HepG2 (cell line): ENCODE measurements at regions of chr2 and their contacts with region 1.

Region 1: GRCh38 chr2:120693121-120693520 is 42.5 kb upstream of the GLI2 start:
- DNase-seq: no peak
- ATAC-seq: no peak
- H3K4me3 ChIP-seq: no peak overlapping the region
- H3K27ac ChIP-seq: no peak overlapping the region
- H3K4me1 ChIP-seq: no peaks in the 10 kb centered on the region
- H3K27me3 ChIP-seq: peaks cover 5 to 65% of the 10 kb centered on the region in 2 experiments; a peak in 4 of 5 replicates
- CTCF ChIP-seq: no peak
- EP300 ChIP-seq: no peak
- POLR2A ChIP-seq: no peak
- RAD21 ChIP-seq: no peak

Region 2: GRCh38 chr2:120712180-120712681 is 19.1 kb after region 1 on chr2:
- CTCF ChIA-PET with region 1: no interaction called
- POLR2A ChIA-PET with region 1: no interaction called
- in situ Hi-C with region 1: no loop called
- intact Hi-C with region 1: no loop called
- DNase-seq: no peak
- ATAC-seq: no peak
- H3K4me3 ChIP-seq: no peak overlapping the region
- H3K27ac ChIP-seq: no peak overlapping the region
- H3K4me1 ChIP-seq: no peaks in the 10 kb centered on the region
- H3K27me3 ChIP-seq: peaks cover 7 to 91% of the 10 kb centered on the region in 2 experiments; a peak in 4 of 5 replicates
- CTCF ChIP-seq: no peak
- EP300 ChIP-seq: no peak
- POLR2A ChIP-seq: no peak
- RAD21 ChIP-seq: no peak

Region 3: GRCh38 chr2:120883617-120884440 is 190.7 kb after region 1 on chr2:
- CTCF ChIA-PET with region 1: no interaction called
- POLR2A ChIA-PET with region 1: no interaction called
- in situ Hi-C with region 1: no loop called
- intact Hi-C with region 1: loop called (anchors 1 kb)
- DNase-seq: no peak
- ATAC-seq: peak; percentile 38; the same call in 2 of the 3 replicates
- H3K4me3 ChIP-seq: no peak overlapping the region
- H3K27ac ChIP-seq: no peak overlapping the region
- H3K4me1 ChIP-seq: peaks cover 14% of the 10 kb centered on the region
- H3K27me3 ChIP-seq: peaks cover 22 to 95% of the 10 kb centered on the region in 2 experiments
- CTCF ChIP-seq: 0 out of 2 replicates have a peak, but pooled peaks have one; percentile 18
- EP300 ChIP-seq: no peak
- POLR2A ChIP-seq: no peak
- RAD21 ChIP-seq: no peak

Region 4: DNA sequence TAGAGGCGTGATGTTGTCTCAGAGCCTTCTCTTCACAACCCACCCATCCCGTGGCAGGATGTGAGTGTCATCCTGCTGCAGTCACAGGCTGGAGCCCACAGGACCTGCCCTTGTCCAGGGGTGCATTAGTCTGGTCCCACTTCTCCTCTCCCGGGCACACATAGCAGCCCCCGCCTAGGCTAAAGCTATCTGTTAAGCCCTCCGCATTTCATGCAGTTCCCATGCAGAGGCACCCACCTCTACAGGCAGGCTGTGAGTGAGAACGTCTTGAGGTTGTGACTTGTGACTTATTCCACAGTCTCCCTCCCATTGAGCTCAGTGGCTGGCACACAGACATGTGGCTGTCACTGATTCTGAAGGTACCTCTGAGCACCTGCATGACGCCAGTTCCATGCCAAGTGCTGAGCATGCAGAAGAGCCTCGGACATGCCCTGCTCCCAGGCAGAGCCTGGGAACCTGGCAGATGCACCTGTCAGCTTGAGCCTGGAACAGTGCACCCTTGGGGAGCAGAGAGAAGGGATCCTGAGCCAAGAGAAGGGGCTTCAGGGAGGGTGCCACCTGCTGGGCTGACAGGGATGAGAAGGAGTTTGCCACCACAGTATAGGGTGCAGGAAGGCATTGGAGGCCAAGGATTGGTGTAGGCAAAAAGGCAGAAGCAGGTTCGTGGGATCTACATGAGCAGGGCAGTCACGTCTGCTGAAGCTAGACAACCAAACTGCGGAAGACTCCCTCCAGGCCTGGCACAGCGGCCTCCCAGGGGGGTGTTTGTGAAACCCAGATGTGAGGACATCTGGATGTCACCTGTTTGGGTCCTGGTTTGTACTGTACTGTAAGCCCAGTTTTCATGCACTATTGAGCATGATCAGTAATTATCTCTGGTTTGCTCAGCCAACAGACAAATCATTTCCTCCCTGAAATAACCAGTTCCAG is 256.2 kb after region 1 on chr2:
- CTCF ChIA-PET with region 1: interaction called, 22 read pairs
- POLR2A ChIA-PET with region 1: no interaction called
- in situ Hi-C with region 1: loop called (anchors 5 kb)
- intact Hi-C with region 1: loop called (anchors 1 kb)
- DNase-seq: peak; percentile 40
- ATAC-seq: peak; percentile 83
- H3K4me3 ChIP-seq: no peak overlapping the region
- H3K27ac ChIP-seq: no peak overlapping the region
- H3K4me1 ChIP-seq: no peaks in the 10 kb centered on the region
- H3K27me3 ChIP-seq: peaks cover 8 to 61% of the 10 kb centered on the region in 2 experiments; a peak in 3 of 5 replicates
- CTCF ChIP-seq: peak; percentile 77
- EP300 ChIP-seq: no peak
- POLR2A ChIP-seq: no peak
- RAD21 ChIP-seq: peak; percentile 69

Region 5: DNA sequence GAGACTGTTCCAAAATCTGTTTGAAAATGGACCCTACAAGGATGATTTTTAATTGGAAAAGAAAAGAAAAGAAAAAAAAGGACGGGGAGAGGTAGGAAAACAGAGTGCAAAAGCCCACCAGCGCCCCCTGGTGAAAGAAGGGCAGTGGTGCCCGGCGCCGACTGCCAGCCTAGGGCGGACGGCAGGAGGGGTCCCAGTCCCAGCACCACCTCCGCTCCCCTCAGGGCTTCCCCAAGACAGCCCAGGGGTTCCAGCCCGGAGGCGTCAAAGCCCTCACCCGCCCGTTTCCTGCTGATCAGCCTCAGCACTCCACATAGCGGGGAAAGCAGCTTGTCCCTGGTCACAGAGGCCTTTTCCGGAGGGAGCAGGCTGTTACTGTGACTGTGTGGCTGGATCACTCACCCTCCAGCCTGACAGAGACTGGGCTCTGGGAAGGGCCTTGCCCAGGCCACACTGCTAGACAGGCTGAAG is 377.9 kb after region 1 on chr2:
- CTCF ChIA-PET with region 1: interaction called, 49 read pairs
- POLR2A ChIA-PET with region 1: no interaction called
- in situ Hi-C with region 1: loop called (anchors 5 kb)
- intact Hi-C with region 1: loop called (anchors 1 kb)
- DNase-seq: peak; percentile 24
- ATAC-seq: peak; percentile 89
- H3K4me3 ChIP-seq: no peak overlapping the region
- H3K27ac ChIP-seq: no peak overlapping the region
- H3K4me1 ChIP-seq: no peaks in the 10 kb centered on the region
- H3K27me3 ChIP-seq: peaks cover 18 to 91% of the 10 kb centered on the region in 2 experiments
- CTCF ChIP-seq: peak; percentile 85
- EP300 ChIP-seq: no peak
- POLR2A ChIP-seq: no peak
- RAD21 ChIP-seq: peak; percentile 67

Region 6: DNA sequence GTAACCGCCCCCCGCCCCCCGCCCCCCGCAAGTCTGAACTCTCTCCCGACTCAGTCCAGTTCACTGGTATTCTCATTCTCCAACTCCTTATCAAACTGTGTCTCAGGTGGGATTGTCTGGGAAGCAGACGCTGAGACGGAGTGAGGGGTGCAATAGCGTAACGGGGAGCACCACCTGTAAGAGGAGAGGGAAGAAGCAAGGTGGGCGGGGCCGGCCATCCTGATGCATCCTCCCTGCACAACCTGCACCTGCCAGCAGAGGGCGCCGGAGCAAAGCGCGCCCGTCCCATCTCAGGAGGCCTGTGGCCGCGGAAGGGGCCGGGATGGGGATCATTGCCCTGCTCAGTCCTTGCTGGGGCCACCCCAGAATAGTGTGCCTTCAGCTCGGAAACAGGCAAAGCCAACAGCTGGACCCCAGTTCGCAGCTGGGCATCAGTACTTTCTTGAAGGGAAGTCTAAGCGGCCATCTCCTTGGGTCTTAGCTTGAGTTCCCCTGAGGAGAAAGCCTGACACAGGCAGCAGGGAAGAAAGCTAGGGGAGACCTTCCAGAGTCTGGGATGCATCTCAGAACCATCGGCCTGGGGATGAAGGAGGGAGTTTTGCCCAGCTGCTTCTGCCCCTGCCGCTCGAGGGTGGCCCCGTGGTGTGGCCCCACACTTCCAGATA is 383.9 kb after region 1 on chr2:
- CTCF ChIA-PET with region 1: interaction called, 59 read pairs
- POLR2A ChIA-PET with region 1: no interaction called
- in situ Hi-C with region 1: loop called (anchors 5 kb)
- intact Hi-C with region 1: loop called (anchors 1 kb)
- DNase-seq: peak; percentile 52
- ATAC-seq: peak; percentile 76
- H3K4me3 ChIP-seq: no peak overlapping the region
- H3K27ac ChIP-seq: no peak overlapping the region
- H3K4me1 ChIP-seq: 0 out of 2 replicates have a peak, but pooled peaks cover 5% of the 10 kb centered on the region
- H3K27me3 ChIP-seq: peaks cover 23 to 80% of the 10 kb centered on the region in 2 experiments
- CTCF ChIP-seq: peak; percentile 91
- EP300 ChIP-seq: no peak
- POLR2A ChIP-seq: no peak
- RAD21 ChIP-seq: no peak; the same call in 1 of the 2 replicates

Region 7: DNA sequence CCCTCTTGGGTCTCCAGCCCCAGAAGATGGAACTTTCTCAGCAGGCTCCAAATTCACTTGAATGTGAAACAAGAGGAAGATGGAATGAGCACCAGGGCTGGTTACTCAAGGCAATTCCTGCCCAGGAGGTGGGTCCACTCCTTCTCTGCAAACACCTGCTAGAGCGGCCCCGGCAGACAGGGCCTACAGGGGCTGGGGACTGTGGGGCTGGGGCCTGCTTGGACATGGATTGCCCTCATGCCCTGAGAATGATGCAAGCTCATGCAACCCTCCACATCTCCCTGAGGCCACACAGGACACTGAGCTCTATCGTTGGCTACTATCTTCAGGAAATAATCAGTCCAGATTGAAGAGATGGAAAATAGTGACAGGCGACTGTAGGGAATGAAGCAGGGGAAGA is 552.8 kb after region 1 on chr2:
- CTCF ChIA-PET with region 1: no interaction called
- POLR2A ChIA-PET with region 1: no interaction called
- in situ Hi-C with region 1: no loop called
- intact Hi-C with region 1: no loop called
- DNase-seq: no peak
- ATAC-seq: no peak; the same call in 2 of the 3 replicates
- H3K4me3 ChIP-seq: no peak overlapping the region
- H3K27ac ChIP-seq: no peak overlapping the region
- H3K4me1 ChIP-seq: no peaks in the 10 kb centered on the region
- H3K27me3 ChIP-seq: peaks cover 13 to 80% of the 10 kb centered on the region in 2 experiments; a peak in 4 of 5 replicates
- CTCF ChIP-seq: no peak
- EP300 ChIP-seq: no peak
- POLR2A ChIP-seq: no peak
- RAD21 ChIP-seq: no peak

Region 8: DNA sequence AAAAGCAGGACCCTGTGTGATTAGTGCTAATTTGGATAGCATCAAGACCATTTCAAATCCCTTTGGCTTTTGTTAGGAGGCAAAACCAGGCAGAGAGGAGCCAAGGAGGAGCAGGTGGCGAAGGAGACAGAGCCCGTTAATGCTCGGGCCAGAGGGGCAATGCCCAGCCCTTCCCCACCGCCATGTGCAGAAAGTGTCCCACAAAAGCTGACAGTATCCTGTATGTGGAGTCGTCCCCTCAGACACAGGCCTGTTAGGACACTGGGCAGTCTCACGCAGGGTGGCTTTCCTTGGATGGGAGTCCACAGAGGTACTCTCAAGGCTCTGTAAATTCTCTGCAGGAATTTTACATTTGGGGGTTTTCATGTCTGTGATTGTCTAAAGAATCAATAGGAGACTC is 636.7 kb after region 1 on chr2:
- CTCF ChIA-PET with region 1: no interaction called
- POLR2A ChIA-PET with region 1: no interaction called
- in situ Hi-C with region 1: loop called (anchors 10 kb)
- intact Hi-C with region 1: no loop called
- DNase-seq: no peak
- ATAC-seq: no peak
- H3K4me3 ChIP-seq: no peak overlapping the region
- H3K27ac ChIP-seq: no peak overlapping the region
- H3K4me1 ChIP-seq: peaks cover 16% of the 10 kb centered on the region
- H3K27me3 ChIP-seq: peaks cover 0 to 7% of the 10 kb centered on the region in 2 experiments; a peak in 1 of 5 replicates
- CTCF ChIP-seq: no peak
- EP300 ChIP-seq: no peak
- POLR2A ChIP-seq: no peak
- RAD21 ChIP-seq: no peak